CD8-positive, alpha-beta T cell (primary cell): ENCODE measurements at regions of chr13 and their contacts with region 1.

Region 1: DNA sequence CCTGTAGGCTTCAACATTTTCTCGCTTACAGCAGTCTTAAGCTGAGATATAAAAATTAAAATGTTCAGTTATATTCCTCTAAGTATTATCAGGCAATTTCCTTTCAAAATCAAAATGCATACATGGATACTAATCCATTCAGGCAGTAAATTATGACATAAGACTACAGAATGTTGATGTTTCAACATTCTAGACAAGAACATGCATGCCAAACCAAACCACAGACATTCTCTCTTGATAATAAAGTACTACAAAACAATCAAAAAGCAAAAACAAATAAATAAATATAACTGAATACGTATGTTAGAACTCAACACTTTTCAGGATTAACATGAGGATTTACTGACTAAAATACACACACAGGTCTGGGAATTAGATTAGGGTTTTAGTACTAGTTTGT is 7.7 kb downstream of the DIS3 start:
- DNase-seq: no peak
- ATAC-seq: no peak
- H3K4me3 ChIP-seq: no peak overlapping the region
- H3K4me3 Mint-ChIP-seq: no peak overlapping the region
- H3K27ac ChIP-seq: no peak overlapping the region
- H3K27ac Mint-ChIP-seq: no peak overlapping the region
- H3K4me1 ChIP-seq: peaks cover under 1% of the 10 kb centered on the region
- H3K4me1 Mint-ChIP-seq: peaks cover 21% of the 10 kb centered on the region
- H3K27me3 ChIP-seq: no peaks in the 10 kb centered on the region
- H3K27me3 Mint-ChIP-seq: no peaks in the 10 kb centered on the region
- CTCF ChIP-seq: no peak

Region 2: GRCh38 chr13:72754111-72754510 is 19.9 kb before region 1 on chr13:
- CTCF ChIA-PET with region 1: no interaction called
- POLR2A ChIA-PET with region 1: no interaction called
- intact Hi-C with region 1: loop called in 1 of 2 experiments (anchors 2 kb)
- DNase-seq: no peak
- ATAC-seq: no peak
- H3K4me3 ChIP-seq: no peak overlapping the region
- H3K4me3 Mint-ChIP-seq: no peak overlapping the region
- H3K27ac ChIP-seq: no peak overlapping the region
- H3K27ac Mint-ChIP-seq: no peak overlapping the region
- H3K4me1 ChIP-seq: no peaks in the 10 kb centered on the region
- H3K4me1 Mint-ChIP-seq: peaks cover 3% of the 10 kb centered on the region
- H3K27me3 ChIP-seq: no peaks in the 10 kb centered on the region
- H3K27me3 Mint-ChIP-seq: no peaks in the 10 kb centered on the region
- CTCF ChIP-seq: no peak

Region 3: DNA sequence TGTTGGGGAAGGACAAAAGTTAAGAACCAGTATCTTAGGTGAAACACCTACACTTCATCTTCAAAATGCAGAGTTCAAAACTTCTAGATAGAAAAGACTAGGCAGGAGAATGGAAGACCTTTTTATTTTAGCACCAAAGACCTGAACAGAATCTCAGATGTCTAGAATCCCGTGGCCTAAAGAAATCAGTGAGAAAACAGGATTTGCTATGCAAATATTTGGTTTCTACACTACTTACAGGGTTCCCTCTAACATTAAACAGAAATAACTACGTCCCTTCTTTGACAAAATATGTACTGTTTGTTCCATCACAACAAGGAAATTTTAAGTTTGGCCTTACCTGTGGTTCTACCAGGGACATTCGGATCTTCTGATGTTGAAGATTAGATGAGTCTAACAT is 13.8 kb before region 1 on chr13:
- CTCF ChIA-PET with region 1: interaction called, 3 read pairs
- POLR2A ChIA-PET with region 1: no interaction called
- intact Hi-C with region 1: loop called (anchors 2 kb)
- DNase-seq: no peak
- ATAC-seq: no peak
- H3K4me3 ChIP-seq: no peak overlapping the region
- H3K4me3 Mint-ChIP-seq: no peak overlapping the region
- H3K27ac ChIP-seq: no peak overlapping the region
- H3K27ac Mint-ChIP-seq: peak overlapping the region; percentile 45
- H3K4me1 ChIP-seq: no peaks in the 10 kb centered on the region
- H3K4me1 Mint-ChIP-seq: no peaks in the 10 kb centered on the region
- H3K27me3 ChIP-seq: no peaks in the 10 kb centered on the region
- H3K27me3 Mint-ChIP-seq: no peaks in the 10 kb centered on the region
- CTCF ChIP-seq: no peak

Region 4: GRCh38 chr13:73168953-73169401 is 395.0 kb after region 1 on chr13:
- CTCF ChIA-PET with region 1: no interaction called
- POLR2A ChIA-PET with region 1: no interaction called
- intact Hi-C with region 1: no loop called
- DNase-seq: no peak
- ATAC-seq: no peak
- H3K4me3 ChIP-seq: no peak overlapping the region
- H3K4me3 Mint-ChIP-seq: no peak overlapping the region
- H3K27ac ChIP-seq: no peak overlapping the region
- H3K27ac Mint-ChIP-seq: no peak overlapping the region
- H3K4me1 ChIP-seq: no peaks in the 10 kb centered on the region
- H3K4me1 Mint-ChIP-seq: peaks cover 2% of the 10 kb centered on the region
- H3K27me3 ChIP-seq: no peaks in the 10 kb centered on the region
- H3K27me3 Mint-ChIP-seq: no peaks in the 10 kb centered on the region
- CTCF ChIP-seq: no peak